ENCODE measurements at regions of chr5 and their contacts with region 1.

Region 1: GRCh38 chr5:135551593-135552447 is 16.1 kb upstream of the NEUROG1 start:
- DNase-seq: peak in 8 of 9 donors; percentile 7 to 53 (median 32)
- ATAC-seq: peak; percentile 75
- H3K4me3 ChIP-seq: no peak overlapping the region
- H3K4me3 Mint-ChIP-seq: no peak overlapping the region
- H3K27ac ChIP-seq: no peak overlapping the region
- H3K27ac Mint-ChIP-seq: no peak overlapping the region
- H3K4me1 ChIP-seq: no peaks in the 10 kb centered on the region
- H3K4me1 Mint-ChIP-seq: peaks cover 0 to 2% (median 0%) of the 10 kb centered on the region in 7 donors
- H3K27me3 ChIP-seq: peaks cover 0 to 4% of the 10 kb centered on the region in 2 donors
- H3K27me3 Mint-ChIP-seq: peaks cover 55 to 69% (median 62%) of the 10 kb centered on the region in 5 donors

Region 2: GRCh38 chr5:135457424-135458071 is 94.3 kb before region 1 on chr5:
- CTCF ChIA-PET with region 1: interaction called, 12 read pairs
- POLR2A ChIA-PET with region 1: no interaction called
- intact Hi-C with region 1: loop called (anchors 1 kb)
- DNase-seq: peak in 7 of 9 donors; percentile 19 to 59 (median 36)
- ATAC-seq: peak; percentile 55
- H3K4me3 ChIP-seq: no peak overlapping the region
- H3K4me3 Mint-ChIP-seq: no peak overlapping the region
- H3K27ac ChIP-seq: no peak overlapping the region
- H3K27ac Mint-ChIP-seq: no peak overlapping the region
- H3K4me1 ChIP-seq: no peaks in the 10 kb centered on the region
- H3K4me1 Mint-ChIP-seq: peaks cover 0 to 5% (median 3%) of the 10 kb centered on the region in 7 donors
- H3K27me3 ChIP-seq: no peaks in the 10 kb centered on the region
- H3K27me3 Mint-ChIP-seq: peaks cover 0 to 18% (median 6%) of the 10 kb centered on the region in 5 donors

Region 3: GRCh38 chr5:135576075-135576599 is 24.3 kb after region 1 on chr5:
- CTCF ChIA-PET with region 1: no interaction called
- POLR2A ChIA-PET with region 1: no interaction called
- intact Hi-C with region 1: no loop called
- DNase-seq: no peak
- ATAC-seq: no peak
- H3K4me3 ChIP-seq: no peak overlapping the region
- H3K4me3 Mint-ChIP-seq: no peak overlapping the region
- H3K27ac ChIP-seq: no peak overlapping the region
- H3K27ac Mint-ChIP-seq: no peak overlapping the region
- H3K4me1 ChIP-seq: no peaks in the 10 kb centered on the region
- H3K4me1 Mint-ChIP-seq: peaks cover 0 to 5% (median 0%) of the 10 kb centered on the region in 7 donors
- H3K27me3 ChIP-seq: peaks cover 0 to 3% of the 10 kb centered on the region in 2 donors
- H3K27me3 Mint-ChIP-seq: peaks cover 36 to 48% (median 44%) of the 10 kb centered on the region in 5 donors

Region 4: DNA sequence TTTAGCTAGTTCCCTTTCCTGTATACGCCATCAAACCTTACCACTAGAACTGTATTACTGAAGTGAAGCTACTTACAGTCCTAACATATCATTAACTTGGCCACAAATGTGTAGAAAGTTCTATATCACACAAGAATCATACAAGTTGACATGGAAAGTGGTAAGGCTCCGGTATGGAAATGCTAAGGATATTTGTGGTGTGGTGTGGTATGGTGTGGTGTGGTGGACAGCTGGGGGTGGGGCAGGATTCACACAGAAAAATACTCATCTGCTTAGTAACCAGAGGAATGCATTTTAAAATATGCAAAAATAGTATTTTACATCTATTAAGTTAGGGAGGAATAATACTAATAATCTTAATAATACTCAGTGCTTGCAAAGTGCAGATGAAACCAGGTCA is 744.1 kb after region 1 on chr5:
- CTCF ChIA-PET with region 1: no interaction called
- POLR2A ChIA-PET with region 1: no interaction called
- intact Hi-C with region 1: no loop called
- DNase-seq: no peak
- ATAC-seq: no peak
- H3K4me3 ChIP-seq: no peak overlapping the region
- H3K4me3 Mint-ChIP-seq: no peak overlapping the region
- H3K27ac ChIP-seq: no peak overlapping the region
- H3K27ac Mint-ChIP-seq: no peak overlapping the region
- H3K4me1 ChIP-seq: no peaks in the 10 kb centered on the region
- H3K4me1 Mint-ChIP-seq: no peaks in the 10 kb centered on the region
- H3K27me3 ChIP-seq: no peaks in the 10 kb centered on the region
- H3K27me3 Mint-ChIP-seq: peaks cover 0 to 16% (median 5%) of the 10 kb centered on the region in 5 donors

Measured in naive thymus-derived CD4-positive, alpha-beta T cell (primary cell).